PC-9 (cell line): ENCODE measurements at regions of chr7 and their contacts with region 1.

Region 1: GRCh38 chr7:23687011-23687410 is 7.0 kb downstream of the FAM221A start:
- DNase-seq: peak; percentile 63 to 83
- H3K4me3 ChIP-seq: no peak overlapping the region
- H3K27ac ChIP-seq: no peak overlapping the region; the same call in 1 of the 2 replicates
- H3K4me1 ChIP-seq: peaks cover 14% of the 10 kb centered on the region
- H3K27me3 ChIP-seq: no peaks in the 10 kb centered on the region
- CTCF ChIP-seq: no peak

Region 2: DNA sequence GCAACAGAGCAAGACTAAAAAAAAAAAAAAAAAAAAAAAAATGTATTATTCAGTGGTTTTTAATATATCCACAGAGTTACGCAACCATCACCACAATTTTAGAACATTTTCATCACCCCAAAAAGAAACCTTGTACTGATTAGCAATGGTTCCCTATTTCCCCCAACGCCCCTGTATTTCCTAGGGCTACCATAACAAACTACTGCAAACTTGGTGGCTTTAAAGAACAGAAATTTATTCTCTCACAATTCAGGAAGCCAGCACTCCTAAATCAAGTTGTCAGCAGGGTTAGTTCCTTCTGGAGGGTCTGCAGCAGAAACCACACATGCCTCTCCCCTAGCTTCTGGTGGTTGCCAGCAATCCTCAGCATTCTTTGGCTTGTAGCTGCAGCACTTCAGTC is 511.1 kb before region 1 on chr7:
- CTCF ChIA-PET with region 1: interaction called, 11 read pairs
- POLR2A ChIA-PET with region 1: no interaction called
- intact Hi-C with region 1: loop called (anchors 10 kb)
- DNase-seq: no peak
- H3K4me3 ChIP-seq: no peak overlapping the region
- H3K27ac ChIP-seq: no peak overlapping the region
- H3K4me1 ChIP-seq: peaks cover 4% of the 10 kb centered on the region
- H3K27me3 ChIP-seq: no peaks in the 10 kb centered on the region
- CTCF ChIP-seq: no peak

Region 3: DNA sequence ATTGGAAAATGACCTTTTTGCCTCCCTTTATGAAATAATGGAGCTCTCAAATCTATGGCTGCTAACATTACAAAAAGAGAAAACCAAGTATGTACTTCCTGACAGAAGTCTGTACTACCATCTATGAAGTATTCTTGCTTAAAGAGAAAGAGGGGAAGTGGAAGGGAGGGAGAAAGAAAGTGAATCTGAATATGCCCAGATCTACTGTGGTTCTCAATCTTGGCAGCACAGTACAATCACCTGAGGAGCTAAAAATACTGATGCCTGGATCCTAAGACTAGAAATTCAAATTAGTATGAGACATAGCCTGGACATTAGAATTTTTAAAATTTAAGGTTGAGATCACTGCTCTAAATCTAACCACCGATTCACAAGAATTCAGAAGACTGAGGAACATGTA is 301.9 kb before region 1 on chr7:
- CTCF ChIA-PET with region 1: no interaction called
- POLR2A ChIA-PET with region 1: no interaction called
- intact Hi-C with region 1: no loop called
- DNase-seq: no peak
- H3K4me3 ChIP-seq: no peak overlapping the region
- H3K27ac ChIP-seq: no peak overlapping the region
- H3K4me1 ChIP-seq: peaks cover 6% of the 10 kb centered on the region; the same call in 1 of the 2 replicates
- H3K27me3 ChIP-seq: no peaks in the 10 kb centered on the region
- CTCF ChIP-seq: no peak

Region 4: DNA sequence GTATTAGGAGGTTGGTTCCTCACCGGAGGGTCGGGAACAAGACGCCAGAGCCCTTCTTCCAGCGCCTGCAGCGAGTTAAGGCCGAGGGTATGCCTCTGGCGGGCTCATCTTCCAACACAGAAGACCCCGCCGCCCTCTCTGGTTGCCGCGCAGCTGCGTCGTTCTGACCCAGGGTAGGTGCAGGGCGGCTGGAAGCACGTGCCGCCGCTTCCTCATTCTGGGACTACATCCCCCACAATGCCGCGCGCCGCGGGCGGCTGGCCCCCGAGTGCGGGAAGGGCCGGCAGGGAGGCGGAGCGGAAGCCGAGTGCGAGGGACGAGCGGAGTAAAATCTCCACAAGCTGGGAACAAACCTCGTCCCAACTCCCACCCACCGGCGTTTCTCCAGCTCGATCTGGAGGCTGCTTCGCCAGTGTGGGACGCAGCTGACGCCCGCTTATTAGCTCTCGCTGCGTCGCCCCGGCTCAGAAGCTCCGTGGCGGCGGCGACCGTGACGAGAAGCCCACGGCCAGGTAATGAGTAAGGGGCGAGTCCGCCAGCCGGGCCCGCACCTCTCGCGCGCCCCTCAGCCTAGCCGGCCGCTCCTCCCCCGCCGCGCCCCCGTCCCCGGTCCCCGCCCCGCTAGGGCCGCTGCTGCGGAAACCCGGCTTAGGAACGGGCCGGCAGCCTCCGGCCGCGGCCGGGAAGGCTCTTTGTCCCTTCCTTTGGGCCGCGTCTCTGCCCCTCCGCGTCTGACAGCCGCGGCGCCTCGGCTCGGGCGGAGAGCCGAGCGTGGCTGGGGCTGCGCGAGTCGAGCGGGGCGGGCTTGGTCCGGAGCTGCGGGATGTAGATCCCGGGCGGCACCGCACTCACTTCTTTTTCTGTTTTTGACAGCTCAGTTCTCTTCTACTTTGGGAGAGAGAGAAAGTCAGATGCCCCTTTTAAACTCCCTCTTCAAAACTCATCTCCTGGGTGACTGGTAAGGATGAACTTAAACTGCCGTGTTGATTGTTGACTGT is 89.6 kb before region 1 on chr7 and contains the start of gene CCDC126:
- CTCF ChIA-PET with region 1: no interaction called
- POLR2A ChIA-PET with region 1: no interaction called
- intact Hi-C with region 1: loop called (anchors 2 kb)
- DNase-seq: peak; percentile 87 to 95
- H3K4me3 ChIP-seq: peak within 1 kb of the TSS; percentile 66
- H3K27ac ChIP-seq: peak within 1 kb of the TSS; percentile 58
- H3K4me1 ChIP-seq: peaks cover 40% of the 10 kb centered on the region
- H3K27me3 ChIP-seq: no peaks in the 10 kb centered on the region
- CTCF ChIP-seq: no peak
- total RNA-seq, gene CCDC126: 5.9 and 6.2 TPM in 2 replicates

Region 5: GRCh38 chr7:23759671-23760391 is 72.8 kb after region 1 on chr7:
- CTCF ChIA-PET with region 1: no interaction called
- POLR2A ChIA-PET with region 1: no interaction called
- intact Hi-C with region 1: loop called (anchors 1 kb)
- DNase-seq: peak; percentile 53 to 98
- H3K4me3 ChIP-seq: no peak overlapping the region
- H3K27ac ChIP-seq: peak overlapping the region; percentile 35
- H3K4me1 ChIP-seq: peaks cover 26% of the 10 kb centered on the region
- H3K27me3 ChIP-seq: no peaks in the 10 kb centered on the region
- CTCF ChIP-seq: no peak